Caco-2 (cell line): ENCODE measurements at regions of chr5 and their contacts with region 1.

Region 1: DNA sequence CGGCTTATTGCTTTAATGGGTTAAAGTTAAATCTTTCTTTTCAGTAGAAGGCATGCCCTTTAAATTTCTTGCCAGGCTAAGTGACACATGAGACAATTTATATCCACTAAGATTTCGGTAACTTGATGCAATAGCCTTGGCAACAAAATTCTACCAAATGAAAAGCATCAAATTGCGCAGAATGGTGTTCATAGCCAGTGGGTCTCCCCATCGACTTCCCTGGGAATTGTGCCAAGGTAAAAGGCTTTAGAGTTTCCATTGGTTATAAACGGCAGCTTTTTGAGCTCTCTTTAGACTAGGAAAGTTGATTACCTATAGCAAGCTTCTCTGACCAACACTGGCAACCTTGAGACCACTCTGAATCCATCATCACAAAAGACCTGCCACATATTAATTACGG is 358.4 kb downstream of the ARRDC3 start:
- DNase-seq: no peak
- H3K4me3 ChIP-seq: no peak overlapping the region
- H3K4me3 Mint-ChIP-seq: no peak overlapping the region
- H3K27ac Mint-ChIP-seq: no peak overlapping the region
- H3K4me1 ChIP-seq: peaks cover 13% of the 10 kb centered on the region
- H3K4me1 Mint-ChIP-seq: peaks cover 16% of the 10 kb centered on the region
- H3K27me3 ChIP-seq: no peaks in the 10 kb centered on the region
- H3K27me3 Mint-ChIP-seq: no peaks in the 10 kb centered on the region
- CTCF ChIP-seq: no peak

Region 2: DNA sequence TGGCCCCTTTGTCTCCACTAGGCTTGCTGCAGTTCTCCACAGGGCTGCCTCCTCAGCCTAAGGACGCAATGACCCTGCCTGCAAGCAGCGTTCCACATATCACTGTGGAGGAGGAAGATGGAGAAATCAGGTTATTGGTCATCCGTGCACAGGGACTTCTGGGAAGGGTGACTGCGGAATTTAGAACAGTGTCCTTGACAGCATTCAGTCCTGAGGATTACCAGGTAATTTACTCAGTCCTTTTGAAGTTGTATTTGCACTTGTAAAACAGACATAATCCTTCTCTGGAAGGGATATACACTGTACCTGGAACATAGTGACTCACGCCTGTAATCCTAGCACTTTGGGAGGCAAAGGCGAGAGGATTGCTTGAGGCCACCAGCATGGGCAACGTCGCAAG is 349.5 kb before region 1 on chr5:
- CTCF ChIA-PET with region 1: no interaction called
- POLR2A ChIA-PET with region 1: no interaction called
- intact Hi-C with region 1: no loop called
- DNase-seq: peak; percentile 73 to 79
- H3K4me3 ChIP-seq: no peak overlapping the region
- H3K4me3 Mint-ChIP-seq: peak overlapping the region; percentile 60
- H3K27ac Mint-ChIP-seq: no peak overlapping the region
- H3K4me1 ChIP-seq: peaks cover 9% of the 10 kb centered on the region
- H3K4me1 Mint-ChIP-seq: peaks cover 10% of the 10 kb centered on the region
- H3K27me3 ChIP-seq: no peaks in the 10 kb centered on the region
- H3K27me3 Mint-ChIP-seq: no peaks in the 10 kb centered on the region
- CTCF ChIP-seq: no peak

Region 3: GRCh38 chr5:90866333-90866732 is 158.4 kb before region 1 on chr5:
- CTCF ChIA-PET with region 1: no interaction called
- POLR2A ChIA-PET with region 1: no interaction called
- intact Hi-C with region 1: loop called (anchors 5 kb)
- DNase-seq: no peak
- H3K4me3 ChIP-seq: no peak overlapping the region
- H3K4me3 Mint-ChIP-seq: no peak overlapping the region
- H3K27ac Mint-ChIP-seq: no peak overlapping the region
- H3K4me1 ChIP-seq: peaks cover 25% of the 10 kb centered on the region
- H3K4me1 Mint-ChIP-seq: peaks cover 14% of the 10 kb centered on the region
- H3K27me3 ChIP-seq: no peaks in the 10 kb centered on the region
- H3K27me3 Mint-ChIP-seq: no peaks in the 10 kb centered on the region
- CTCF ChIP-seq: peak; percentile 34 to 42